ENCODE measurements at regions of chr17 and their contacts with region 1.

Region 1: GRCh38 chr17:17694169-17695081 is 13.2 kb downstream of the RAI1 start:
- DNase-seq: peak; percentile 74
- H3K4me3 ChIP-seq: peak overlapping the region; percentile 62
- H3K27ac ChIP-seq: peak overlapping the region; percentile 83
- H3K4me1 ChIP-seq: peaks cover 65% of the 10 kb centered on the region
- H3K27me3 ChIP-seq: no peaks in the 10 kb centered on the region
- CTCF ChIP-seq: no peak

Region 2: GRCh38 chr17:17496189-17497064 is 198.0 kb before region 1 on chr17 and contains the start of gene RASD1:
- CTCF ChIA-PET with region 1: no interaction called
- POLR2A ChIA-PET with region 1: no interaction called
- intact Hi-C with region 1: no loop called
- DNase-seq: peak; percentile 88
- H3K4me3 ChIP-seq: peak within 1 kb of the TSS; percentile 71
- H3K27ac ChIP-seq: peak within 1 kb of the TSS; percentile 38
- H3K4me1 ChIP-seq: peaks cover 36% of the 10 kb centered on the region
- H3K27me3 ChIP-seq: peaks cover 13% of the 10 kb centered on the region
- CTCF ChIP-seq: peak; percentile 67
- total RNA-seq, gene RASD1: 0.21 and 0.24 TPM in 2 replicates

Region 3: DNA sequence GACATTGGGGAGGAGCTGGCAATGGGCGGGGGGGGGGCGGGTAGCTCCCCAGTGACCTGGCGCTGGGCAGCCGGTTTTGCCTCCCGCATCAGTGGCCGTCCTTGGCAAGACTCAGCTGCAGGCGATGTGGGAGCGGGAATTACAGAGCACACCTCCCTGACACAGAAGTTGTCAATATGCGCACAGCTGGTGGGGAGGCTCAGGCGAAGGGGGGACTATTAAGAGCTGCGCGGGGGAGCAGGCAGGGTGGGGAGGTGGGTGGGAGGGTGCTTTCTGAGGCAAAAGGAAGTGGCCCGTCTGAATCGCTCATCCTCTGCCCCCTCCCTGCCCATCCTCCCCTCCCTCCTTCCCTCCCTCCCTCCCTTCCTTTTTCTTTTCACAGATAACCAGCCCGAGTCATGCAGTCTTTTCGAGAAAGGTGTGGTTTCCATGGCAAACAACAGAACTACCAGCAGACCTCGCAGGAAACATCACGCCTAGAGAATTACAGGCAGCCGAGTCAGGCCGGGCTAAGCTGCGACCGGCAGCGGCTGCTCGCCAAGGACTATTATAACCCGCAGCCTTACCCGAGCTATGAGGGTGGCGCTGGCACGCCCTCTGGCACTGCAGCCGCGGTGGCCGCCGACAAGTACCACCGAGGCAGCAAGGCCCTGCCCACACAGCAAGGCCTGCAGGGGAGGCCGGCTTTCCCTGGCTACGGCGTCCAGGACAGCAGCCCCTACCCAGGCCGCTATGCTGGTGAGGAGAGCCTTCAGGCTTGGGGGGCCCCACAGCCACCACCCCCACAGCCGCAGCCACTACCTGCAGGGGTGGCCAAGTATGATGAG is 98.3 kb after region 1 on chr17:
- CTCF ChIA-PET with region 1: no interaction called
- POLR2A ChIA-PET with region 1: no interaction called
- intact Hi-C with region 1: loop called (anchors 5 kb)
- DNase-seq: peak; percentile 84
- H3K4me3 ChIP-seq: peak overlapping the region; percentile 10
- H3K27ac ChIP-seq: peak overlapping the region; percentile 30
- H3K4me1 ChIP-seq: peaks cover 58% of the 10 kb centered on the region
- H3K27me3 ChIP-seq: no peaks in the 10 kb centered on the region
- CTCF ChIP-seq: no peak